ENCODE measurements at regions of chr7 and their contacts with region 1.

Region 1: DNA sequence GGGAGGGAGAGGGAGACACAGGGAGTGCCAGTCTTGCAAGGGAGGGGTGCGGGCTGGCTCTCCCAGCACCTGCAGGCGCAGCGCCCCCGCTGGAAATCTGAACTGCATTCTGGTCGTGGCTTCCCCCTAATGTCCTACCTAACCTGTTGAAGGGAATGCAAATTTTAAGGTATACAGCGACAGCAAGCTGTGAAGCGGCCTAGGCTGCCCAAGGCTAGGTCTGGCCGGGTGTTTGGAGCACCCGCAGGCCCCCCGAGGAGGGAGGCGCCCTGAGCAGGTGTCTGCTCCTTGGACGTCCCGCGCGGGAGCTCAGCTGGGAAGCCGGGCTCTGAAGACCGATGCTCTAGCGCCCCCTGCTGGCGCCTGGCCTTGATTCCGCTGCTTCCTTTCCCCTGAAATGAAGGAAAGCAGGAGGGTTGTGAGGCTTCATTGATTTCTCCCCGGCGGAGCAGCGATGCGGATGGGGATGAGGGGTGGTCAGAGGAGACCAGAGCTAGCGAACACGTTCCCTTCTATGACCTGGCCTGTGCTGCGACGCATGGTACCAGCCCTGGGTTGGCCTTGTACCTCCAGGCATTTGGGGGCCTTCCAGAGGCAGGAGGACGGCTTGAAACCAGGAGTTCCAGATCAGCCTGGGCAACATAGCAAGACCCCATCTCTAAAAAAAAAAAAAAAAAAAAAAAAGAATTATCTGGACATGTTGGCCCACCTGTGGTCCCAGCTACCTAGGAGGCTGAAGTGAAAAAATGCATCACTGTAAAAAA is 601.3 kb downstream of the GALNT17 start:
- DNase-seq: no peak
- ATAC-seq: peak; percentile 78
- H3K4me3 ChIP-seq: no peak overlapping the region
- H3K27ac ChIP-seq: no peak overlapping the region
- H3K4me1 ChIP-seq: no peaks in the 10 kb centered on the region
- H3K27me3 ChIP-seq: no peaks in the 10 kb centered on the region
- CTCF ChIP-seq: peak; percentile 75 to 90 (median 84)
- EP300 ChIP-seq: no peak
- POLR2A ChIP-seq: no peak
- RAD21 ChIP-seq: peak; percentile 81

Region 2: GRCh38 chr7:70710011-70710480 is 1023.2 kb before region 1 on chr7:
- CTCF ChIA-PET with region 1: no interaction called
- POLR2A ChIA-PET with region 1: no interaction called
- RAD21 ChIA-PET with region 1: no interaction called
- SMC1A ChIA-PET with region 1: no interaction called
- in situ Hi-C with region 1: no loop called
- intact Hi-C with region 1: loop called (anchors 10 kb)
- DNase-seq: peak; percentile 73
- ATAC-seq: peak; percentile 91
- H3K4me3 ChIP-seq: no peak overlapping the region
- H3K27ac ChIP-seq: peak overlapping the region; percentile 53; the same call in 1 of the 2 replicates
- H3K4me1 ChIP-seq: peaks cover 16% of the 10 kb centered on the region
- H3K27me3 ChIP-seq: no peaks in the 10 kb centered on the region
- CTCF ChIP-seq: no peak
- EP300 ChIP-seq: peak in 1 of 2 experiments; percentile 64; a peak in 1 of 4 replicates
- POLR2A ChIP-seq: no peak
- RAD21 ChIP-seq: no peak

Region 3: GRCh38 chr7:70829221-70830059 is 903.8 kb before region 1 on chr7:
- CTCF ChIA-PET with region 1: interaction called, 38 read pairs
- POLR2A ChIA-PET with region 1: no interaction called
- RAD21 ChIA-PET with region 1: interaction called, 10 read pairs
- SMC1A ChIA-PET with region 1: interaction called, 21 read pairs
- in situ Hi-C with region 1: no loop called
- intact Hi-C with region 1: loop called (anchors 1 kb)
- DNase-seq: no peak
- ATAC-seq: peak; percentile 92
- H3K4me3 ChIP-seq: peak overlapping the region; percentile 27; the same call in 1 of the 2 replicates
- H3K27ac ChIP-seq: no peak overlapping the region
- H3K4me1 ChIP-seq: peaks cover 5% of the 10 kb centered on the region
- H3K27me3 ChIP-seq: no peaks in the 10 kb centered on the region
- CTCF ChIP-seq: peak; percentile 79 to 86 (median 83)
- EP300 ChIP-seq: no peak
- POLR2A ChIP-seq: no peak
- RAD21 ChIP-seq: peak; percentile 75

Region 4: DNA sequence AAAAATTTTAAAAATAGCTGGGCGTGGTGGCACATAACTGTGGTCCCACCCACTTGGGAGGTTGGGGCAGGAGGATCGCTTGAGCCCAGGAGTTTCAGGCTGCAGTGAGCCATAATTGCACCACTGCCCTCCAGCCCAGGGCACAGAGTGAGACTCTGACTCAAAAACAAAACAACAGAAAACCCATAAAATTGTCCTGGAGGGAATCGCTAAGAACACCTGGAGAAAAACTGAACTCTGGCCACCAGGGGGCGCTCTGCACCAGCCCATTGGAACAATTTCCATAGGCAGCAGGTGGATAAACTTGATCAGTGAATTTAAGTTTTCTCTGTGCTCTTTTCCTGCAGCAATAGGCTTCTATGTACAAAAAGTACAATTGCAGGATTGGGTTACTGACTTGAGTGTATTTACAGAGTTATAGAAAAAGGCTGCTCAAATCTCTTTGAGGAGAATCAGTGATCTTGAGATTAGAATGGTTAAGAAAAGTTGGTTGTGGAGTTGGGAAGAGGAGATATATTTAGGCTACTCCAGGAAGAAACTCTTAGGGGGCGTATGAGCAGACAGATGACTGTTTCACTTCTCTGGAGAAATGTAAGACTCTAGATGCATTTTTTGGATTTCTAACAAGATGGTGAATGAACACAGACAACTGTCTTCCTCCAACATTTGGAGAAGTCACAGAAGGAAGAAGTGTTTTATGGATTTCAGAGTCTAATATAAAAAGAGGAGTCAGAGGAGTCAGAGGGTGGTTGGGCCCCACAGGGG is 876.2 kb before region 1 on chr7:
- CTCF ChIA-PET with region 1: interaction called, 61 read pairs
- POLR2A ChIA-PET with region 1: no interaction called
- RAD21 ChIA-PET with region 1: interaction called, 22 read pairs
- SMC1A ChIA-PET with region 1: interaction called, 6 read pairs
- in situ Hi-C with region 1: loop called (anchors 5 kb)
- intact Hi-C with region 1: loop called (anchors 1 kb)
- DNase-seq: peak; percentile 12
- ATAC-seq: peak; percentile 66
- H3K4me3 ChIP-seq: no peak overlapping the region
- H3K27ac ChIP-seq: no peak overlapping the region
- H3K4me1 ChIP-seq: no peaks in the 10 kb centered on the region
- H3K27me3 ChIP-seq: no peaks in the 10 kb centered on the region
- CTCF ChIP-seq: peak; percentile 75 to 82 (median 79)
- EP300 ChIP-seq: no peak
- POLR2A ChIP-seq: no peak
- RAD21 ChIP-seq: peak; percentile 95

Region 5: DNA sequence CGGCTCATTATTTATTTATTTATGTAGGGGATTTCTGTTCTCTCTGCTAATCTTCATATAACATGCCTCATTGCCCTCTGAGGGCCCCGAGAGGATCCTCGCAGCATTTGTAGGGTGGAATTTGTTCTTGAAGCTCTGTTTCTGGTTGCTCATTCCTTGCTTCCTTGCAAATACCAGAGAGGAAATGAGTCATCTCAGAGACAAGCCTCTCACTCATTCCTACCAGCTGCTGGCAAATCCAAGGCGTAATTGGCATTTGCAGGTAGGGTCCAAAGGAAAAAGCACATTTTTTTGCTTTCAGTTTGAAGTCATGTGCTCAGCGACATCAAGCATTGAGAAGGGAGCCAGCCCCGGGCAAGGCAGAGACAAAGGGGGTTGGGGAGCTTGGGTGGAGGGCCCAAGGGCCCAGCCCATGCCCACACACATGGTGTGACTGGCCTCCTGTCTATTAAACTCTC is 99.7 kb before region 1 on chr7:
- CTCF ChIA-PET with region 1: no interaction called
- POLR2A ChIA-PET with region 1: no interaction called
- RAD21 ChIA-PET with region 1: no interaction called
- SMC1A ChIA-PET with region 1: no interaction called
- in situ Hi-C with region 1: no loop called
- intact Hi-C with region 1: no loop called
- DNase-seq: no peak
- ATAC-seq: no peak
- H3K4me3 ChIP-seq: no peak overlapping the region
- H3K27ac ChIP-seq: no peak overlapping the region
- H3K4me1 ChIP-seq: no peaks in the 10 kb centered on the region
- H3K27me3 ChIP-seq: no peaks in the 10 kb centered on the region
- CTCF ChIP-seq: no peak
- EP300 ChIP-seq: no peak
- POLR2A ChIP-seq: no peak
- RAD21 ChIP-seq: no peak

Region 6: DNA sequence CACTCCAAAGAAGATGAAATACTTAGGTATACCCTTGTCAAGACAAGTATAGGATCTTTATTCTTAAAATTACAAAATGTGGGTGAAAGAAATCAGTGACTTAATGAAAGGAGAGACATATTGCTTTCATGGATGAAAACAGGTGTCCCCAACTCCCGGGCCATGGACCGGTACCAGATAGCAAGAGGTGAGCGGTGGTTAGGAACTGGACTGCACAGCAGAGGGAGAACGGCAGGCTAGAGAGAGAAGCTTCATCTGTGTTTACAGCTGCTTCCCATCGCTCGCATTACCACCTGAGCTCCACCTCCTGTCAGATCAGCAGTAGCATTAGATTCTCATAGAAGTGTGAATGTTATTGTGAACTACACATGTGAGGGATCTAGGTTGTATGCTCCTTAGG is 269.9 kb after region 1 on chr7:
- CTCF ChIA-PET with region 1: no interaction called
- POLR2A ChIA-PET with region 1: no interaction called
- RAD21 ChIA-PET with region 1: no interaction called
- SMC1A ChIA-PET with region 1: no interaction called
- in situ Hi-C with region 1: no loop called
- intact Hi-C with region 1: no loop called
- DNase-seq: no peak
- ATAC-seq: no peak
- H3K4me3 ChIP-seq: no peak overlapping the region
- H3K27ac ChIP-seq: no peak overlapping the region
- H3K4me1 ChIP-seq: no peaks in the 10 kb centered on the region
- H3K27me3 ChIP-seq: no peaks in the 10 kb centered on the region
- CTCF ChIP-seq: no peak
- EP300 ChIP-seq: no peak
- POLR2A ChIP-seq: no peak
- RAD21 ChIP-seq: no peak

Region 7: GRCh38 chr7:72785166-72785955 is 1052.1 kb after region 1 on chr7:
- CTCF ChIA-PET with region 1: no interaction called
- POLR2A ChIA-PET with region 1: no interaction called
- RAD21 ChIA-PET with region 1: no interaction called
- SMC1A ChIA-PET with region 1: interaction called, 3 read pairs
- in situ Hi-C with region 1: loop called (anchors 25 kb)
- intact Hi-C with region 1: no loop called
- DNase-seq: no peak
- ATAC-seq: no peak
- H3K4me3 ChIP-seq: no peak overlapping the region
- H3K27ac ChIP-seq: no peak overlapping the region
- H3K4me1 ChIP-seq: no peaks in the 10 kb centered on the region
- H3K27me3 ChIP-seq: no peaks in the 10 kb centered on the region
- CTCF ChIP-seq: no peak
- EP300 ChIP-seq: no peak
- POLR2A ChIP-seq: no peak
- RAD21 ChIP-seq: no peak

Measured in GM12878 (cell line).